Activated CD4-positive, alpha-beta T cell treated with anti-CD3 and anti-CD28 coated beads for 36 hours (primary cell): ENCODE measurements at regions of chr6 and their contacts with region 1.

Region 1: DNA sequence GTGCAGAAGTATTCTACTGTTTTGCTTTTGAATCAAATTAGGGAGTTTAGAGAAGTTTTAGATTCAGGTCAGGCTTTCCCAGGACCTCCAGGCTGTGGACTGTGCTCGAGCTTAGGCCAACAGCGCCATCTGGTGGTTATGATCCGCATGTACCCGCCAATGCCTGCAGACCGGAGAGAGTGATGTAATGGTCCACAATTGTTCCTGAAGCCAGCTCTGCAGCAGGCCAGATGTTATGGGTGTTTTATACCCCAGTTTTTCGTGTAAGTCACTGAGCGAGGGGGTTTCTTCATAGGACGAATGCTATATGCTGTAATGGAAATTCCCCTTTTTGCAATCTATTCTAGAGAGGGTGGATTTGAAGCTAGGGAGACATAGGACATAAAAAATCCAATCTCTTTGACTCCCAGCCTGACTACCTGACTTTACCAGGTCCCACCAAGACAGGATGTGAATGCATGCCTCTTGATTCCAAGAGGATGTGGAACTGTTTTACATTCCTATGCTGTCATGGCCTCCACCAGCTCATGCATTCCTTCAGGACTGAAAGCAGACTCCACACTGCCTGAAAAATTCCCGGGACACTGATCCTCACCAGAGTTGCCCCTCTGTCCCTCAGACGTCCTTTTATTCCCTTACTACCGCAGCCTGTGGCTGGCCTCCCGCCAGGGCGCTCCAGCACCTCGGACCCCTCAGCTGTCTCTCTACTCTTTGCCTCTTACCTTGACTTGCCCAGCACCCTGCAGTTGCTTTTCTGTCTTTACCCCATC is 41.2 kb upstream of the LY86 start:
- DNase-seq: peak; percentile 90
- ATAC-seq: peak; percentile 95
- H3K4me3 Mint-ChIP-seq: peak overlapping the region; percentile 51
- H3K27ac Mint-ChIP-seq: no peak overlapping the region
- H3K4me1 Mint-ChIP-seq: peaks cover 2% of the 10 kb centered on the region
- H3K27me3 Mint-ChIP-seq: peaks cover 29% of the 10 kb centered on the region

Region 2: GRCh38 chr6:5143634-5144311 is 1403.5 kb before region 1 on chr6:
- CTCF ChIA-PET with region 1: interaction called, 7 read pairs
- POLR2A ChIA-PET with region 1: no interaction called
- intact Hi-C with region 1: loop called in 1 of 2 experiments (anchors 5 kb)
- DNase-seq: peak; percentile 91
- ATAC-seq: peak; percentile 71
- H3K4me3 Mint-ChIP-seq: no peak overlapping the region
- H3K27ac Mint-ChIP-seq: no peak overlapping the region
- H3K4me1 Mint-ChIP-seq: no peaks in the 10 kb centered on the region
- H3K27me3 Mint-ChIP-seq: no peaks in the 10 kb centered on the region

Region 3: GRCh38 chr6:5752391-5752680 is 795.0 kb before region 1 on chr6:
- CTCF ChIA-PET with region 1: no interaction called
- POLR2A ChIA-PET with region 1: no interaction called
- intact Hi-C with region 1: no loop called
- DNase-seq: no peak
- ATAC-seq: no peak
- H3K4me3 Mint-ChIP-seq: no peak overlapping the region
- H3K27ac Mint-ChIP-seq: no peak overlapping the region
- H3K4me1 Mint-ChIP-seq: no peaks in the 10 kb centered on the region
- H3K27me3 Mint-ChIP-seq: no peaks in the 10 kb centered on the region

Region 4: GRCh38 chr6:6057424-6058053 is 489.8 kb before region 1 on chr6:
- CTCF ChIA-PET with region 1: interaction called, 29 read pairs
- POLR2A ChIA-PET with region 1: no interaction called
- intact Hi-C with region 1: loop called (anchors 1 kb)
- DNase-seq: no peak
- ATAC-seq: peak; percentile 51
- H3K4me3 Mint-ChIP-seq: no peak overlapping the region
- H3K27ac Mint-ChIP-seq: no peak overlapping the region
- H3K4me1 Mint-ChIP-seq: no peaks in the 10 kb centered on the region
- H3K27me3 Mint-ChIP-seq: peaks cover 16% of the 10 kb centered on the region

Region 5: DNA sequence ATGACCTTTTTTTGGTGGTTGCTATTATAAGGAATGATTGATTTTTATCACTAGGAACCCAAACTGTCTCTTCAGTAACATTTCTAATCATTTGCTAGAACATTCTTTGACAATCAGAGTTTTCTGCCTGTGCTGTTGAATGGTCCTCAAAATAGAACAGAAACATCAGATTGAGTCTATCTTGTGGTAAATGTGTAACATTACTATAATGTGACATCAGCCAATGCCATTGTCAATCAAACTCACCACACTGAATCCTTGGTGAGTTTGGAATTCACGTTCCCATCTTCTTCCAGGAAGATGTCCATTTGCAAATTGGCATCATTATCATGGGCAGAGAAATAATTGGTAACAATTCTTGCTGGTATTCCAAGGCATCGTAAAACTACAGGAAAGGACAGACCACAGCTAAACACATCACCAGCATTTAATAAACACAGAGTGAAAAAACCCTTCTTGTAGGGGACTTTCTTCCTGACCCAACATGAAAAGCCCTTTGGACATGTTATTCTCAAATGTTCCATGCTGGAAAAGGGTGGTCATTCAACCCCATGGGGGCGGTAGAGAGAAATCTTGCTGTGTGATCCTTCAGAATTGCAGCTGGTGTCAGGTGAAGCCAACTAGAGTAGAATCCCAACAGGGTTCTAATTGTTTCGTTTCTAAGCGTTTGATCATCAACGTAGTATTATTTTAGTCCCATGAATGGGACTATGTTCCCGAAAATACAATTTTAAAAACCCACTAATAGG is 325.3 kb before region 1 on chr6:
- CTCF ChIA-PET with region 1: no interaction called
- POLR2A ChIA-PET with region 1: no interaction called
- intact Hi-C with region 1: loop called in 1 of 2 experiments (anchors 5 kb)
- DNase-seq: peak; percentile 20
- ATAC-seq: no peak
- H3K4me3 Mint-ChIP-seq: no peak overlapping the region
- H3K27ac Mint-ChIP-seq: no peak overlapping the region
- H3K4me1 Mint-ChIP-seq: no peaks in the 10 kb centered on the region
- H3K27me3 Mint-ChIP-seq: peaks cover 25% of the 10 kb centered on the region

Region 6: DNA sequence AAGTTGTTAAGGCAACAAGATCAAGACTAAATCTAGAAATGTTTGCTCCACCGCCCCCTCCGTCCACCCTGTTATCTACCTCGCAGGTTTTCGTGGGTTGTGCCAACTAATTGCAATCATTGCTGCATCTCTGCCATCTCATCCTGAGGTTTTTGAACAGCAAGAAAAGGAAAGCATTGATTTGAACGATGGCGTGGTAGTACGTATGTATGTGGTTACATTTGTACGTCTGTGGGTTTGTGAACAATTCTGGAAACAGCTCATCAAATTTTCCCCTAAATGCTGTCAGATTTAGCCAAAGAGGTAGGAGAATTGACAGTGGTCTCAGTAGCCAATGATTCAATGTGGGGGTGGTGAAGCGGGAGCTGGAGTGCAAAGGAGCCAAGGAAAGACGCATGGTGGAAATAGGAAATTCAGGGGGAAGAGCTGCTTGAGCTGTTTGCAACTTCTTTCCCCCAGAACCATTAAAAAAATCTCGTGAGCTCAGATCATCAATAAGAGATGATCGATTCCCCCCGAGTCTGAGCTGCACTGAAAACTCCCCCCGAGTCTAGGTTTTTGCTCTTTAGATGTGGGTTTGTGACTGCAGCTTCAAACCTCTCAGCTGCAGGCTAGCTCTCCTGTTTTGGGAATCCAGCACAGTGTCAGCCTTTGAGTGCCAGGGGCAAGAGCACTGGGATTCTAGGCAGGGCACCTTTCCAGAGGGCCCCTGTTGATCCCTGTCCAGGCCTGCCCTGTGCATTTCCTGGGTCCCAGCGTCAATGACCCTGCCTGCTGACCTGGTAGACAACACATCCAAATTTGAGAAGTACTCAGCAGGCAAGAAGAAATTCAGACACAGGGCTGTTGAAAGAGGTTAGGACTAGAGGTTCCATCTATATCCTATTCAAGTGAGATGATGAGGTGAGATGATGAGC is 31.3 kb before region 1 on chr6:
- CTCF ChIA-PET with region 1: interaction called, 18 read pairs
- POLR2A ChIA-PET with region 1: no interaction called
- intact Hi-C with region 1: loop called (anchors 2 kb)
- DNase-seq: peak; percentile 84
- ATAC-seq: peak; percentile 90
- H3K4me3 Mint-ChIP-seq: no peak overlapping the region
- H3K27ac Mint-ChIP-seq: no peak overlapping the region
- H3K4me1 Mint-ChIP-seq: peaks cover 18% of the 10 kb centered on the region
- H3K27me3 Mint-ChIP-seq: peaks cover 78% of the 10 kb centered on the region